Right ventricle myocardium inferior (tissue), 1 donor: ENCODE measurements at regions of chr5 and their contacts with region 1.

Region 1: GRCh38 chr5:123367739-123368138 is 55.5 kb downstream of the CEP120 start:
- DNase-seq: no peak
- ATAC-seq: no peak

Region 2: DNA sequence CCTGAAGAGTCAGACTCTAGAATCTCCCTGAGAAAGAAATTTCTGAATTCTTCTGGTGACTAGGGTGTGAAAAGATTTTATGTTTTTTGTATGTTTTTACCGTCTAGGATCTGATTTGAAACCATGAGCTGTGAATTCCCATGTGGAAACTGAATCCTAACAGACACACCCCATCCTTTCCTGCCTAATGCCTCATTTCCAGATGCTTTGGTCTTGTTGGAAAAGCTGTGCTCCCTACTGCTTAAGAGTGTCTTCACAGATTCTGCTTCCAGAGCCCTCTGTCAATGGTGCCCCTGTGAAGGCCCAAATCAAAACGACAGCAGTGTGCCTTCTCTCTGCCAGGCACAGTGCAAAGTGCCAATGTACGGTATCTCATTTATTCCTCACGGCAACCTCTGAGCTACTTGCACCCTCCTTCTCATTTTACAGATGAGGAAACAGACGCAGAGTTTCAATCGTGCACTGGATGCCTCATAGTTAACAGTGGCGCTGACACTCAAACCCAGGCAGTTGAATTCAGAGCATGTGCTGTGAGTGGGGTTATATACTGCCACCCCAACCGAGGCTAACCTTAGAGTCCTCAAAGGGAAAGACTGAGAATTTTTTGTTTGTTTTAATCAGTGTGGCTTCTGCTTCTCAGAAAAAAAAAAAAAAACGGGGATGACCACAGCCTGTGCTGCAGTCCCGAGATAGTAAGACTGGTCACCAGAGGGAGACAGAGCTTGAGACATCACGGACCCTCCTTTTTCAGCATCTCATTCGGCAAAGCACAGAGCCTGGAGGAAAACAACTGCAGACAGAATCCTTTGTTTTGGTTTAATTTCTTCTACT is 867.3 kb before region 1 on chr5:
- intact Hi-C with region 1: loop called (anchors 10 kb)
- DNase-seq: no peak
- ATAC-seq: peak; percentile 69